Dendritic cell treated with granulocyte-macrophage colony-stimulating factor and Interleukin-4, amounts not matched to agents 40 ng/mL and 50 ng/mL, for 4 days (primary cell): ENCODE measurements at regions of chr13 and their contacts with region 1.

Region 1: DNA sequence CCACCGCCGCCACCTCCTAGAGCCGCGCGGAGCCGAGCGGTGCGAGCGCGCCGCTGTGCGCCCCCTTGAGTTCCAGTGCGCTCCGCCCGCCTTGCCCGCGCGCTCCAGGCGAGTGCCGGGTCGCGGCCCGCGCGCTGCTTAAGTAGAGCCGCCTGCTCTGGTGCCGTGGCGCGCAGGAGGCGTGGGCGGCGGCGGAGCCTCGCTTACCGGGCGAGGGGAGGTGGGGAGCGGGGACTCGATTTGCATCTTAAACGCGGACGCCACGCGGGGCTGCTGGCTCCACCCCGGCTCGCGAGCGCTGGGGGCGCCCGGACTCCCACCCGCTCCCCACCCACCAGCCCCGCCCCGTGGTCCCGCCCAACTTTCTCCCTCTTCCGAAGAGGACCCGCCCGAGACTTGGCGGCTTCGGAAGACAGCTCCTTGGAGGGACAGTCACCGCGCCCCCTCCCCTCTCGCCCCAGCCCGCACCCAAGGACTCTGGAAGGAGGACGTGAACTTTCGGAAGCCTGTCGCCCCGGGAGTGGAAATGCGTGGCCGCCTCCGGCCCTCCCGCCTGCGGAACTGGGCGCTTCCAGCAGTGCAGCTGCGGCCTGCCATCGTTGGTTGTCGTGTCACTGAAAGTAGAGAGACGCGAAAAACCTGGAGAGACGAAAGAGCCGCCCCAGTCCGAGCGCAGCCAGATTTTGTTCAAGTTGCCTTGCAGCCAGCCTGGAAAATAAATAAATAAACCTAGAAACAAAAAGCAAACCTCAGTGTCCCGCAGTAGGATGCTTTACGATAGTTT is at the start of gene KCTD12:
- H3K4me3 Mint-ChIP-seq: peak within 1 kb of the TSS; percentile 93
- H3K27ac Mint-ChIP-seq: peak within 1 kb of the TSS; percentile 97
- H3K4me1 Mint-ChIP-seq: peaks cover 25% of the 10 kb centered on the region
- H3K27me3 Mint-ChIP-seq: peaks cover 4% of the 10 kb centered on the region

Region 2: GRCh38 chr13:76667551-76667950 is 218.9 kb before region 1 on chr13:
- intact Hi-C with region 1: loop called (anchors 5 kb)
- H3K4me3 Mint-ChIP-seq: no peak overlapping the region
- H3K27ac Mint-ChIP-seq: no peak overlapping the region
- H3K4me1 Mint-ChIP-seq: peaks cover 40% of the 10 kb centered on the region
- H3K27me3 Mint-ChIP-seq: no peaks in the 10 kb centered on the region

Region 3: GRCh38 chr13:77196052-77196618 is 309.7 kb after region 1 on chr13:
- intact Hi-C with region 1: no loop called
- H3K4me3 Mint-ChIP-seq: no peak overlapping the region
- H3K27ac Mint-ChIP-seq: no peak overlapping the region
- H3K4me1 Mint-ChIP-seq: no peaks in the 10 kb centered on the region
- H3K27me3 Mint-ChIP-seq: no peaks in the 10 kb centered on the region